Dorsolateral prefrontal cortex (tissue), 120 donors: ENCODE measurements at regions of chr18 and their contacts with region 1.

Region 1: DNA sequence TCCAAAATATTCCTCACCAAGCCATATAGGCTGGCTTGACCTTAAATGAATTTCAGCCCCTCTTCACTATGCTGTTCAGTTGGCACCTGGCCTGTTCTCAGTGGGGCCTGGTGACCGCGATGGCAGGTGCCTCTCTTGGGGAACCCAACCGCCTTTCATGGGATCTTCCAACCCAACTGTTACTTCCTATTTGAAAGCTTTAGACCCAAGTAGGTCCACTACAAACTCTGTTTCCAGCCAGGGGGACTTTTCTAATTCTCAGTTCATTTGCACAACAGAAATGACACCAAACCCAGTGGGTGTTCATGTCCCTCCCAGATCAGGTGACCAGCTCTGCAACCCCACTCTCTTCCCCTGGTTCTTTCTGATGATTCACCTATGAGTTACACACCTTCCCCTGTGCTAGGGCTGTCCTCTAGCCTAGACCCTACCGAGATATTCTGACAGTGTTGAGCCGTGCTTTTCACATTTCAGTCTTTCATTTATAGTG is 35.6 kb upstream of the NDUFV2 start:
- DNase-seq: no peak
- H3K4me3 ChIP-seq: no peak overlapping the region
- H3K27ac ChIP-seq: no peak overlapping the region
- H3K27me3 ChIP-seq: no peaks in the 10 kb centered on the region
- CTCF ChIP-seq: no peak

Region 2: GRCh38 chr18:9147440-9148202 is 80.8 kb after region 1 on chr18:
- intact Hi-C with region 1: loop called (anchors 2 to 5 kb)
- DNase-seq: peak in 1 of 10 donors; percentile 35
- H3K4me3 ChIP-seq: no peak overlapping the region
- H3K27ac ChIP-seq: peak overlapping the region in 26 of 59 donors; percentile 1 to 53 (median 29)
- H3K27me3 ChIP-seq: no peaks in the 10 kb centered on the region
- CTCF ChIP-seq: peak; percentile 36 to 92 (median 75)

Region 3: DNA sequence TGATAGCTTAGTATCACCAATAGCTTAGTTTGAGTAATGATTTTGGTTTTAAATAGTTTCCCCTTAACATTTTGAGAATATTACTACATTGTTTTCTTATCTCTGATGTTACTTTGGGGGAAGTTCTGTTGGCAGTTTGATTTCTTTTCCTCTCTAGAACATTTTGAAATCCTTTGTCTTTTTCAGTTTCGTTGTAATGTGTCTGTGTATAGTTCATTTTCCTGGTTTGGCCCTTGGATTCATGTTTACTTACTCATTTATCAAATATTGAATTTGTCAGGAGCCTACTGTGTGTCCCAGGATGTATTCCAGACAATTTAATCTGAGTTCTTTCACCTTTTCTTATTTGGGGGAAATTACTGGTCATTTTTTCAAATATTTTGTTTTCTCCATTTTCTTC is 86.4 kb after region 1 on chr18:
- intact Hi-C with region 1: loop called (anchors 2 to 5 kb)
- DNase-seq: no peak
- H3K4me3 ChIP-seq: no peak overlapping the region
- H3K27ac ChIP-seq: peak overlapping the region in 1 of 59 donors; percentile 3
- H3K27me3 ChIP-seq: no peaks in the 10 kb centered on the region
- CTCF ChIP-seq: no peak